Esophagus muscularis mucosa (tissue), 4 donors: ENCODE measurements at regions of chr2 and their contacts with region 1.

Region 1: DNA sequence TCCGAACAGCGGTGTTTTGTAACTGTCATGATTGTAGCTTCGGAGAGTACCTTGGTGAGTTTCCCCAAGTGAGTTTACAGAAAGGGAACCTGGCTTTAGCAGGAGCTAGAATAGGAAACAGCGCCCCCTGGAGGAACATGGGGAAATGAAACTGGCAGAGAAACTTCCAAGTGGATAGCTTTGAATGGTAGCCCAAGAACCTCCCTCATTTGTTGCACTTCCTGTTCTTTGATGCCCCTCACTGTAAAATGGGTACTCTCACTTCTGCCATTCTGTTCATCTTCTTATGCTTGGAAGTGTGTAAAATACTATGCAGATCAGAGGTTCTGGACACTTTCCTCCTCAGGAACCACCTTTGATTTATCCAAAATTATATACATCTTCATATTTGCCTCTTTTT is 36.2 kb downstream of the CHST10 start:
- DNase-seq: no peak
- H3K4me3 ChIP-seq: no peak overlapping the region
- H3K27ac ChIP-seq: no peak overlapping the region
- H3K4me1 ChIP-seq: peaks cover 0 to 10% (median 2%) of the 10 kb centered on the region in 4 donors
- H3K27me3 ChIP-seq: no peaks in the 10 kb centered on the region
- CTCF ChIP-seq: peak; percentile 90 to 96 (median 91)
- EP300 ChIP-seq: no peak
- POLR2A ChIP-seq: no peak

Region 2: GRCh38 chr2:100262555-100263320 is 118.5 kb before region 1 on chr2:
- intact Hi-C with region 1: loop called (anchors 2 kb)
- DNase-seq: no peak
- H3K4me3 ChIP-seq: peak overlapping the region in 1 of 4 donors; percentile 17
- H3K27ac ChIP-seq: no peak overlapping the region
- H3K4me1 ChIP-seq: peaks cover 2 to 25% (median 15%) of the 10 kb centered on the region in 4 donors
- H3K27me3 ChIP-seq: no peaks in the 10 kb centered on the region
- CTCF ChIP-seq: peak; percentile 95 to 100 (median 99)
- EP300 ChIP-seq: no peak
- POLR2A ChIP-seq: no peak